K562 (cell line): ENCODE measurements at regions of chr5 and their contacts with region 1.

Region 1: DNA sequence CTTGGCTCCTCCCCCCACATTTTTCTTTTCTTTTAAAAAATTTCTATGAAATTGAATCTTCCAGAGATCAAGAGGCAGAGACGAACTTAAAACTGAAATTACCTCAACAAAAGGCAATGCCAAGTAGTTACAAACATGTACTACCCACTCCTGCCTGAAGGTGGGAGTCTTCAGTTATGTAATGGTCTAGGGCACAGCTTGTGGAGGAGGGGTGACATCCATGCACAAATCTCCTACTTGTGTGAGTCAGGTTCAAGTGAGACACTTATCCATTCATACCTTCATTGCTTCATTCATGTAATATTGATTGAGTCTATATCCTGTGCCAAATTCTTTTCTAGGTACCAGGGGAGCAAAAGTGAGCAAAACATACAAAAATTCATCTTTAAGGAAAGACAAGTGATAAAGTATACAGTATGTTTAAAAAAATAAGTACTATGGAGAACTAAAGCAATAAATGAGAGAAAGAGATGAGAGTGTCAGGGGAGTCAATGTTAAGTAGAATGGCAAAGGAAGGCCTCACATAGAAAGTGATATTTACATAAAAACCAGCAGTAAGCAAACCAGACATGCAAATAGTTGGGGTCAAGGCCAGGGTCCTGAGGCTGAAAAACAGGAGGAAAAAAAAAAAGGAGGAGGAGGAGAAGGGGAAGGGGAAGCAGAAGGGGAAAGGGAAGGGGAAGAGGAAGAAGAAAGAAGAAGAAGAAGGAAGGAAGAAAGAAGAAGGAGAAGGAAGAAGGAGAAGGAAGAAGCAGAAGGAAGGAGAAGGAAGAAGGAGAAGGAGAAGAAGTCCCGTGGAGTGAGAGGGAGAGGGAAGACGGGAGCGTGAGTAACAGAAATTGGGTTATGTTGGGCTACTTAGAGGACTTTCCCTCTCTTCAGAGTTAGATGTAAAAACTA is 24.9 kb upstream of the NSG2 start:
- DNase-seq: peak; percentile 63 to 77 (median 66)
- ATAC-seq: peak; percentile 96
- H3K4me3 ChIP-seq: no peak overlapping the region
- H3K27ac ChIP-seq: no peak overlapping the region
- H3K4me1 ChIP-seq: no peaks in the 10 kb centered on the region
- H3K27me3 ChIP-seq: peaks cover 0 to 6% of the 10 kb centered on the region in 2 experiments; a peak in 2 of 5 replicates
- CTCF ChIP-seq: peak; percentile 75 to 78 (median 76)
- EP300 ChIP-seq: no peak
- POLR2A ChIP-seq: no peak
- RAD21 ChIP-seq: peak; percentile 66 to 87

Region 2: GRCh38 chr5:174317259-174317894 is 296.7 kb after region 1 on chr5:
- CTCF ChIA-PET with region 1: interaction called, 3 read pairs
- POLR2A ChIA-PET with region 1: no interaction called
- in situ Hi-C with region 1: no loop called
- intact Hi-C with region 1: loop called (anchors 2 kb)
- DNase-seq: peak; percentile 42 to 52 (median 48)
- ATAC-seq: peak; percentile 89
- H3K4me3 ChIP-seq: no peak overlapping the region
- H3K27ac ChIP-seq: no peak overlapping the region
- H3K4me1 ChIP-seq: peaks cover 0 to under 1% of the 10 kb centered on the region in 2 experiments; a peak in 1 of 5 replicates
- H3K27me3 ChIP-seq: peaks cover 9 to 39% of the 10 kb centered on the region in 2 experiments; a peak in 4 of 5 replicates
- CTCF ChIP-seq: peak; percentile 70 to 76 (median 76)
- EP300 ChIP-seq: no peak
- POLR2A ChIP-seq: no peak
- RAD21 ChIP-seq: peak; percentile 77 to 86